Uterus (tissue), 4 donors: ENCODE measurements at regions of chrX and their contacts with region 1.

Region 1: DNA sequence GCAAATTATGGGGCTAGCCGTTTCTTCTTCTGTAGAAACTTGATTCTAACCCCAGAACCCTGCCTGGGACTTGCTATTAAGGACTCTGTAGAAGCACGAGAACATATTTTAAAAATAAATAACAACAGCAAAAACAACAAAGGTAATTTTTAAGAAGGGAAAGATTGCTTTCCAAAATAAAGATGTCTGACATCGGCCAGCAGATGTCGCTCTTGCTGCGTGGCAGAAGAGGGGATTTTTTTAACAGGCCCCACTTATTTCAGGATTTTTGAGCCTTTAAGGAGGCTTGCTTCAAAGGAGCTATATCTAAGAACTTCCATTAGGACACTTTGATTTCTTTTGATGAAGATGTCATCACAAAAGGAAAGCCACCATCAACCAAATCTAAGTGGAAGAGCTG is 62.8 kb upstream of the EGFL6 start:
- DNase-seq: peak; percentile 34 to 45
- H3K4me3 ChIP-seq: no peak overlapping the region
- H3K27ac ChIP-seq: no peak overlapping the region
- H3K4me1 ChIP-seq: no peaks in the 10 kb centered on the region
- H3K27me3 ChIP-seq: no peaks in the 10 kb centered on the region
- CTCF ChIP-seq: peak; percentile 67 to 82 (median 74)
- POLR2A ChIP-seq: no peak

Region 2: GRCh38 chrX:14029425-14030173 is 523.0 kb after region 1 on chrX and contains the start of gene GEMIN8:
- intact Hi-C with region 1: loop called (anchors 5 kb)
- DNase-seq: peak; percentile 83 to 92
- H3K4me3 ChIP-seq: peak within 1 kb of the TSS; percentile 54 to 55
- H3K27ac ChIP-seq: peak within 1 kb of the TSS; percentile 76 to 79
- H3K4me1 ChIP-seq: no peaks in the 10 kb centered on the region
- H3K27me3 ChIP-seq: no peaks in the 10 kb centered on the region
- CTCF ChIP-seq: peak in 2 of 4 experiments; percentile 8 to 13
- POLR2A ChIP-seq: peak; percentile 20 to 63
- total RNA-seq, gene GEMIN8: 20.0 to 59.1 (median 31.7) TPM